A673 (cell line): ENCODE measurements at regions of chr1 and their contacts with region 1.

Region 1: DNA sequence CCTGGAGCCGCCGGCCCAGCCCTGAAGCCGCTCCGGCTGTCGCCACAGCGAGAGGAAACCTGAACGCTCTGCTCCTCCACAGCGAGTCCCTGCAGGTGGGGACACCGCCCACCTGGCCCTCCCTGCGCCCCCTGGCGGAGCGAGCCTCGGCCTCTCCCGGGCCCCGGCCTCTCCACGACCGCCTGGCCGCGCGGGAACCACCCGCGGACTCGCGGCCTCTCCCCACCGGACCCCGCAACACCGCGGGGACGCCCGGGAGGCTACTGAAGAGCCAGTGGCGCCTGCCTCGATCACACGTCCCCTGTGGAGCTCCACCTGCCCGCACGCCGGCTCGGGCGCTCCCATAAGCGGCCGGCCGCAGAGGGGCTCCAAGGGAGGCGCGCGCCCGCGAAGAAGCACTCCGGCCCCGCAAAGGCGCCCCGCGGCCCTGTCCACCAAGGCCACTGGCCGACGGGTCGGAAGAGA is 109.6 kb downstream of the KCNN3 start:
- DNase-seq: peak; percentile 27
- H3K4me3 ChIP-seq: peak overlapping the region; percentile 36
- H3K27ac ChIP-seq: no peak overlapping the region
- H3K4me1 ChIP-seq: no peaks in the 10 kb centered on the region
- H3K27me3 ChIP-seq: peaks cover 26% of the 10 kb centered on the region
- CTCF ChIP-seq: peak; percentile 68

Region 2: GRCh38 chr1:154669464-154670282 is 90.8 kb before region 1 on chr1:
- CTCF ChIA-PET with region 1: no interaction called
- POLR2A ChIA-PET with region 1: no interaction called
- intact Hi-C with region 1: loop called (anchors 5 kb)
- DNase-seq: peak; percentile 78
- H3K4me3 ChIP-seq: no peak overlapping the region
- H3K27ac ChIP-seq: no peak overlapping the region
- H3K4me1 ChIP-seq: peaks cover 9% of the 10 kb centered on the region
- H3K27me3 ChIP-seq: no peaks in the 10 kb centered on the region
- CTCF ChIP-seq: peak; percentile 84

Region 3: DNA sequence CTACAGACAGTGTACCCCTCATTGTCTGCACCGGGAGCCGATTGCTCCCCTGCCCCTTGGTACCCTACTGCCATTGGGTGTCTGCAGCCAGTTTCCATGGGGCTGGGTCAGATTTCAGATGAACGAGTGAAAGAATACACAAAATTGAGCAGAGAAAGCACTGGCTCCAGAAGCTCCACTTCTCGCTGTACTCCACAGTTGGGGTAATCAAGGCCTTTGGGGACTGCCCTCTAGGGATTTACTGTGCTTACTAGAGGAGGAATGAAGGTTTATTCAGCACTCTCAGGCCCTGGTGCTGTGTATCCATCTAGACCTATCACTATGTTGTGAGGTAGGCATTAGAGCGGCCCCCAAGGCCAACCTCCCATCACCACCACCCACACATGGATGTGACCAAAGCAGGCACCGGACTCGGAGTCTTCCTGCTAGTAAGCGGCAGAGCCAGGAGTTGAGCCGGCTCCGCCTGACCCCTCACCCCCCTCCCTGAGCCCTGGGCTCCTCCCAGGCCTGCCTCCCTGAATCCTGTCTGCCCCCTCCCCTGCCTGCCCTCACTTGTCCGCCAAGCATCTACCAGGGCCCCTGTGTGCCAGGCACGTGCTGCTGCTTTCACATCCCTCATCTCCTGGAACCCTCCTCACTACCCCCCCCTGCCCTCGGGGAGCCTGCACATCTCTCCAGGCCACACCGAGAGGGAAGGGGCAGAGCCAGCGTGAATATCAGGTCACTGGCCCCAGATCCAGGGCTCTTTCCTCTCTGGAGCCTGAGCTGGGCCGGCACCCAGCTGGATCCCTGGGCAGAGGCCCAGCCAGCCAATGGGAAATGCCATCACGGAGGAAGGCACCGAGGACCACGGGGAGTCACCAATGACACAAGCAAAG is 86.3 kb after region 1 on chr1:
- CTCF ChIA-PET with region 1: no interaction called
- POLR2A ChIA-PET with region 1: no interaction called
- intact Hi-C with region 1: no loop called
- DNase-seq: no peak
- H3K4me3 ChIP-seq: no peak overlapping the region
- H3K27ac ChIP-seq: no peak overlapping the region
- H3K4me1 ChIP-seq: peaks cover 56% of the 10 kb centered on the region
- H3K27me3 ChIP-seq: no peaks in the 10 kb centered on the region
- CTCF ChIP-seq: no peak